ENCODE measurements at regions of chr13 and their contacts with region 1.

Region 1: GRCh38 chr13:30617315-30618185 is at the start of gene USPL1:
- DNase-seq: peak; percentile 95 to 98 (median 96)
- H3K4me3 ChIP-seq: peak within 1 kb of the TSS; percentile 67 to 99 (median 88)
- H3K27ac ChIP-seq: peak within 1 kb of the TSS; percentile 97 to 100 (median 100)
- H3K27me3 ChIP-seq: no peaks in the 10 kb centered on the region
- CTCF ChIP-seq: peak in 48 of 56 donors; percentile 11 to 63 (median 42)
- total RNA-seq, gene USPL1: 14.6 to 43.5 (median 21.5) TPM

Region 2: DNA sequence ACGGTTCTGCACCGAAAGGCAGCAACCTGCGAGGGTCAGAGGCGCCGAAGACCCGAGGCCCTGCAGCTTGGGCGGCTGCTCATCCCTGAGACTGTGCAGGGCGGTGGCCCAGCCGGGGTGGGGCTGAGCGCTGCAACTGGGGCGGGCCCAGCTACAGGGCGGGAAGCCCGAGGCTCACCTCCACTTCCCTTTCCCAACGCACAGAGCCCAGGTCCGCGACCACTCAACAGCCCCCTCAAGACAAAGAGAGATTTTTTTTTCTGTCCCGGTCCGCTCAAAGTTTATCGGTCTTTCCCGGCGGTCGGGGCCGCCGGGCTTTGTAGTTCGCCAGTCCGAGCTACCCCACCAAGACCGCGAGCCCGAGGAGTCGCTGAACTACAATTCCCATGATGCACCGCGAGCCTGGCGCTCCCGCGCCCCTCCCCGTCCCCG is 310.8 kb before region 1 on chr13:
- intact Hi-C with region 1: loop called in 1 of 2 experiments (anchors 2 kb)
- DNase-seq: peak; percentile 88 to 97 (median 93)
- H3K4me3 ChIP-seq: peak overlapping the region; percentile 74 to 99 (median 92)
- H3K27ac ChIP-seq: peak overlapping the region; percentile 41 to 97 (median 93)
- H3K27me3 ChIP-seq: no peaks in the 10 kb centered on the region
- CTCF ChIP-seq: peak in 17 of 56 donors; percentile 3 to 40 (median 15)

Region 3: GRCh38 chr13:30422054-30422839 is 195.3 kb before region 1 on chr13 and contains the start of gene UBE2L5:
- intact Hi-C with region 1: loop called in 1 of 2 experiments (anchors 5 kb)
- DNase-seq: peak; percentile 60 to 84 (median 72)
- H3K4me3 ChIP-seq: peak within 1 kb of the TSS; percentile 48 to 86 (median 70)
- H3K27ac ChIP-seq: peak within 1 kb of the TSS; percentile 52 to 97 (median 92)
- H3K27me3 ChIP-seq: no peaks in the 10 kb centered on the region
- CTCF ChIP-seq: peak in 8 of 56 donors; percentile 6 to 32 (median 10)
- total RNA-seq, gene UBE2L5: 0.22 to 2.8 (median 0.73) TPM in 102 of 120 experiments, not detected in the others

Region 4: DNA sequence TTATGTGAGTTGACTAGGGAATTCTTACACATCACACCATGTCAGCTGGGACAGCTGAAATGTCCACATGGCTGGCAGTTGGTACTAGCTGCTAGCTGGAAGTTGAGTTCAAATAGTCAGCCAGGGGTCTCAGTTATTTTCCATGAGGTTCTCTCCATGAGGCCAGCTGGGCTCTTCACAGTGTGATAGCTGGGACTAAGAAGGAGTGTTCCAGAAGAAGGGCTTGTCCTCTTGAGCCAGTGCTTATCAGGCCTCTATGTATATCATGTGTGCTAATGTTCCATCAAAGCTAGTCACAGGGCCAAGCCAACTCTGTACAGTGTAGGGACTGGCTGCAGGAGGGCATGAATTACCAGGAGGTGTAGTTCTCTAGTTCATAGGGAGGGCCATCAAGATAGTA is 12.0 kb after region 1 on chr13:
- intact Hi-C with region 1: no loop called
- DNase-seq: no peak
- H3K4me3 ChIP-seq: no peak overlapping the region
- H3K27ac ChIP-seq: no peak overlapping the region
- H3K27me3 ChIP-seq: no peaks in the 10 kb centered on the region
- CTCF ChIP-seq: no peak

Region 5: DNA sequence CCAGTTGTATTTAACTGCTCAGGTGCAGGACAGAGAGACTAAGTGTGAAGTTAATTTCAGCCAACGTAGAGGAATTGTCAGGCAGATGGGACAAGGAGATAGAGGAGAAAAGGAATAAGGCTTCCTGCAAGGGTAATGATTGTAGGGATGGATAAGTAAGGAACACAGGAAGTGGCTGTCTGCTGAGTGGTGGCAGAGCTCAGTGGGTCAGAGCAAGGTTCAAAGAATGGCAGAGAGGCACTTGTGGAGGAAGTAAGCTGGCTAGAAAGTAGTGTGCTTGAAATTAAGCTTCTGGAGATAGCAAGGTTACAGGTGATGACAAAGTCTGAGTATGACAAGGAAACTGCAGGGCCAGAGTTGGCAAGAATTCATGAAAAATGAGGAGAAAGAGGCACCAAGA is 48.1 kb after region 1 on chr13:
- intact Hi-C with region 1: no loop called
- DNase-seq: no peak
- H3K4me3 ChIP-seq: no peak overlapping the region
- H3K27ac ChIP-seq: no peak overlapping the region
- H3K27me3 ChIP-seq: no peaks in the 10 kb centered on the region
- CTCF ChIP-seq: no peak

Region 6: DNA sequence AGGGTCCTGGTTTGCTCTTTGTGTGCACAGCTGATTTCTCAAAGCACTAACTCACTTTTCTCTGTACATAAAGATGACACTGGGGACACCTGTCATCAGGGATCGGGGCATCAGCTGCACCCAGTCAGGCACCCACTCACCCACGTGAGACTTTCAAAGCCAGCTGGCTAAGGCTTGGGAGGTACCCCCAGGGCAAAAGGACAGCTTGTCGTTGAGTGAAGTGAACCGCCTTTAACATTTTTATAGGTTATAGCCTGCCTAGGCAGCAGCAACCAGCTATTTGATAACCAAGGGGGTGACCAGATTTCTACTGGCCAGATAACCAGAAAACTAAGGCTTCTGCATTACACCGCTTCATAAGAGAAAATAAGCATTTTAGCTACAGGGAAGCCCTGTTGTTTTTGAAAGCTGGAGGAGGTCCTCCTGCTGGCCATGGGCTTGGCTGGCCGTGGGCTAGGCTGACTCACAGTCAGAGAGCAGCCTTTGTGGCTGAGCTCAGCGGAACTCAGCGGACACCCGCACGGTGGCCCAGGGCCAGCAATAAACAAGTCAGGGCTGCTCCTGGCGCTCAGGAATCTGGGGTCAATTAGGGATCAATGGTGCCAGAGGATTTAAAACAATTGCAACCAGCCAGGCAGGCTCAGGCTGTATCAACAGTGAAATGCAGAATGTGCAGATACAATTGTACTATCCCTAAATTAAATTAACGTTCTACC is 174.9 kb after region 1 on chr13:
- intact Hi-C with region 1: loop called in 1 of 2 experiments (anchors 10 kb)
- DNase-seq: peak; percentile 58 to 88 (median 76)
- H3K4me3 ChIP-seq: peak overlapping the region in 15 of 59 donors; percentile 0 to 44 (median 13)
- H3K27ac ChIP-seq: peak overlapping the region in 27 of 59 donors; percentile 1 to 71 (median 40)
- H3K27me3 ChIP-seq: no peaks in the 10 kb centered on the region
- CTCF ChIP-seq: peak in 36 of 56 donors; percentile 10 to 54 (median 26)

Region 7: GRCh38 chr13:31044377-31045285 is 427.1 kb after region 1 on chr13:
- intact Hi-C with region 1: loop called in 1 of 2 experiments (anchors 5 kb)
- DNase-seq: peak; percentile 70 to 88 (median 84)
- H3K4me3 ChIP-seq: no peak overlapping the region
- H3K27ac ChIP-seq: peak overlapping the region in 3 of 59 donors; percentile 14 to 38 (median 24)
- H3K27me3 ChIP-seq: peaks cover 0 to 5% (median 0%) of the 10 kb centered on the region in 45 donors
- CTCF ChIP-seq: peak; percentile 90 to 98 (median 96)